HAP-1 (cell line): ENCODE measurements at regions of chr16 and their contacts with region 1.

Region 1: GRCh38 chr16:88287219-88287618 is 95.5 kb upstream of the ZNF469 start:
- DNase-seq: peak; percentile 41 to 80
- H3K4me3 ChIP-seq: no peak overlapping the region
- H3K4me1 ChIP-seq: no peaks in the 10 kb centered on the region
- H3K27me3 ChIP-seq: no peaks in the 10 kb centered on the region; the same call in 1 of the 2 replicates

Region 2: GRCh38 chr16:88069397-88070168 is 217.6 kb before region 1 on chr16:
- in situ Hi-C with region 1: no loop called
- DNase-seq: no peak
- H3K4me3 ChIP-seq: no peak overlapping the region
- H3K4me1 ChIP-seq: no peaks in the 10 kb centered on the region
- H3K27me3 ChIP-seq: no peaks in the 10 kb centered on the region

Region 3: DNA sequence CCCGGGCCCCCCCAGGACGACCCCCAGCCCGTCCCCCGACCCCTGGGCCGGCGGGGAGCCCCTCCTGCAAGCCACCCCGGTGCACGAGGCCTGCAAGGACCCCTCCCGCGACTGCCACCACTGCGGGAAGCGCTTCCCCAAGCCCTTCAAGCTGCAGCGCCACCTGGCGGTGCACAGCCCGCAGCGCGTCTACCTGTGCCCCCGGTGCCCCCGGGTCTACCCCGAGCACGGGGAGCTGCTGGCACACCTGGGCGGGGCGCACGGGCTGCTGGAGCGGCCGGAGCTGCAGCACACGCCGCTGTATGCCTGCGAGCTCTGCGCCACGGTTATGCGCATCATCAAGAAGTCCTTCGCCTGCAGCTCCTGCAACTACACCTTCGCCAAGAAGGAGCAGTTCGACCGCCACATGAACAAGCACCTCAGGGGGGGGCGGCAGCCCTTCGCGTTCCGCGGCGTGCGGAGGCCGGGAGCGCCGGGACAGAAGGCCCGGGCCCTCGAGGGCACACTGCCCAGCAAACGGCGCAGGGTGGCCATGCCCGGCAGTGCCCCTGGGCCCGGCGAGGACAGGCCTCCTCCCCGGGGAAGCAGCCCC is 150.2 kb after region 1 on chr16:
- in situ Hi-C with region 1: loop called (anchors 10 kb)
- DNase-seq: peak; percentile 27 to 81
- H3K4me3 ChIP-seq: no peak overlapping the region
- H3K4me1 ChIP-seq: no peaks in the 10 kb centered on the region
- H3K27me3 ChIP-seq: peaks cover 27% of the 10 kb centered on the region